ENCODE measurements at regions of chr3 and their contacts with region 1.

Region 1: DNA sequence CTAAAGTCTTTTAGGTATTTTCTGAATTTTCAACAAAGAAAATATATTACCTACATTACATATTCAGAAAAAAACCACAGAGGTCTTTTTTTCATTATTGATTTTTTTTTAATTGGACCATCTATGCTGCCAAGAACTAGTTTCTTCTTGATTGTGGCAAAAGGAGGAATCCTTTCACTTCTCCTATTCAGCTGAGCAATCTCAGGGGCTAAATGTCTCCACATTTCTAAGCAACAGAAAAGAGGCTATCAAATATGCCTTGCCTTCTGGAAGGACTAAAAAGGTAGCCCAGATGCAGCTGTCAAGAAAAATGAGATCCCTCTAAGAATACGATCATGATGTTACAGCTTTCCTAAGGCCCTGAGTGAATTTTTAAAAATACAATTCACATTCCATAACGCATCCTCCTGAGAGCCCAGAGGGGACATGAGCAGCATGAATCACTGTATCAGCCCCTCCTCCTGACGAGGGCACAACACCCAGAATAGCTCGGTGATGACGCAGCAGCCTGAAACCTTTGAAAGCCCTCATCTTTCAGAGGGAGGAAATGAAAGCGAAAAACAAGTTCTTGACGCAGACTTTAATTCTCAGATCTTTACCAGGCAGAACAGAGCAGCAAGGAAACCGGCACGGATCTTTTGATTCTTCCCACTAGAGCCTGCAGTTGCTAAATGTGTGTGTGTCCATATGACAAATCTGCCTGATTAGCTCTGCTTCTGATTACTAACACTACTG is 24.6 kb downstream of the RUBCN start:
- DNase-seq: peak; percentile 92
- ATAC-seq: peak; percentile 98 to 99

Region 2: GRCh38 chr3:197466586-197467399 is 245.3 kb before region 1 on chr3:
- intact Hi-C with region 1: no loop called
- DNase-seq: no peak
- ATAC-seq: peak in 1 of 2 donors; percentile 59

Region 3: DNA sequence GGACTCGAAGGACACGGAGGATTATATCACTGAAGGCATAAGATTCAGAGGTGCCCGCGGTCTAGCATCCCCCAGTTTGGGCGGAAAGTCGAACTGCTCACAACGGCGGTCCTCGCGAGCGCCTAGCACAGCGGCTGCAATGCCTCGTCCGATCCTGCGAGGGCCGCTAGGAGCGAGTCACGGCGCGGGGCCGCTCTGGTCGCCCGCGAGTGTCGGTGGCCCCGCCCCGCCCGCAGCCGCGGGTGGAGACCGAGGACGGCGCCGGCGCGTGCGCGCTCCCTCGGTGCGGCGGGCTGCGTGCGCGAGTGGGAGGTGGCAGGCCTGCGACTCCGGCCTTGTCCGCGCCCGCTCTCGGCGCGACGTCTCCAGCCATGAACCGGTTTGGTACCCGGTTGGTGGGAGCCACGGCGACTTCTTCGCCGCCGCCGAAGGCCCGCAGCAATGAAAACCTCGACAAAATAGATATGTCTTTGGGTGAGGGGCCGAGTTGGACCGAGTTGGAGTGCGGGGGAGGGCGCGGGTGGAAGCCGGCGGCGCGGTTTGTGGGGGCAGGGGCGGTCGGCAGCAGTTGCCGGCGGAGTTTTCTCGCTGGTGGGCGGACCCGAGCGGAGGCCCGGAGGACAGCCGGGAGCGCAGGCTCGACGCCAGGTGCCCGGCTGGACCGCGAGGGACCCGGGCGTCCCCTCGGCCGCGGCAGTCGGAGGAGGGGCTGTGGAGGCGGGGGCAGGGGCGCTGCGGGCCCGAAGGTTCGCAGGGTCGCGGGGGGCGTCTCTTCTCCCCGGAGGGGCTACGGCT is 37.7 kb after region 1 on chr3 and contains the start of gene FYTTD1:
- intact Hi-C with region 1: loop called in 1 of 2 experiments (anchors 2 kb)
- DNase-seq: peak; percentile 95
- ATAC-seq: peak; percentile 96
- total RNA-seq, gene FYTTD1: 51.5 to 74.9 TPM